ENCODE measurements at regions of chr9 and their contacts with region 1.

Region 1: DNA sequence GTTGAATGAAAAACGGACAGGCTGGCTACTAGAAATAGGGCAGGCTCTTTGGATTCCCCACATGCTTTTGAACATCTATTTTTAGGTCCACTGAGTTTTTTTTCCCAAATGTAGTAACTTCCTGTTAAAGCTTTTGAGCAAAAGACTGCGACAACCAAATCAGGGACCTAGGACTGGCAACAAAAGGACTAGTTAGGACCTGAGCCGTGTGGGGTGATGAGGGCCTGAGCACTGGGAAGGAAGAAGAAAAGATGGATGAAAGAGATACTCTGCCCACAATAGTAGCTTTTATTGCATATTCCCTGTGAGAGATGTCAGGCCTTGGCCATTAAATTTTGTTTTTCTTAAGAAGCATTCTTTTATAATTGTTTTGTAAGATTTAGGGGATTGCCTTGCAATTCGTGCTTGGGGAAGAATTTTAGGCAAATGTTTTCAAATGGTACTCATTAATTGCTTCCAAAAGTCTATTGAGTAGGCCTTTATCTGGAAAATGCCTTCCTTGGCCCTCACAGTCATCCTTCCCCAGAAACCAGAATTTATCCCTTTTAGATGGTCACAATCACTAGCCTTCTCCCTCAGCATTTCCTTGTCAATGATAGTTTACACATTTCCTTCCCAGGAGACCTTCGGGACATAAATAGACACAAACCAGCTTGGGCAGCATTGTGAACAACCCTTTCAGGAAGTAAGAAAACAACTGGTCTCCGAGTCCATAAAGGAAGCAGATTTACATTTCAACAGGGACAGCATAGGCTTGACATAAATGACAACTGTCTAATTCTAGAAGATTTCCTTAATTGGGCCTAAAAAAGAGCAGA is 166.5 kb downstream of the RMI1 start:
- DNase-seq: no peak
- ATAC-seq: peak; percentile 38
- H3K4me3 ChIP-seq: no peak overlapping the region
- H3K27ac ChIP-seq: peak overlapping the region; percentile 0 to 45
- H3K4me1 ChIP-seq: peaks cover 0 to 11% of the 10 kb centered on the region in 2 donors
- H3K27me3 ChIP-seq: no peaks in the 10 kb centered on the region

Region 2: GRCh38 chr9:84170521-84171141 is 23.5 kb after region 1 on chr9:
- intact Hi-C with region 1: loop called in 1 of 2 experiments (anchors 2 kb)
- DNase-seq: peak; percentile 86 to 88
- ATAC-seq: peak; percentile 80
- H3K4me3 ChIP-seq: no peak overlapping the region
- H3K27ac ChIP-seq: peak overlapping the region in 1 of 2 donors; percentile 1
- H3K4me1 ChIP-seq: no peaks in the 10 kb centered on the region
- H3K27me3 ChIP-seq: no peaks in the 10 kb centered on the region

Measured in aorta (tissue), 5 donors.